Endothelial cell of umbilical vein (primary cell): ENCODE measurements at regions of chr3 and their contacts with region 1.

Region 1: DNA sequence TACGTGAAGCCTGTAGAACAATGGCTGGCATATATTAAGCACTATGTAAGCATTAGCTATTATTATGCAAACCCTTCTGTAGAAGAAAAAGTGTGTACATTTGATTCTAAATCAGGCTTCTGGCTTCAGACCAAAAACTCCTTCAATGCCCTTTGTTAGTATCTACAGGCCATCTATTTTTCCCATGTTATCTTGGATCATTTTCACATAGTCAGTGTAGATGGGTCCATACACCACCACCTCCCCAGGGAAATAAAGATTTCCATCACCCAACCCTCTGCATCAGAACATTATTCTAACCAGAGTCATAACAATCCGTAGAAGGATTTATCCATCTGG is 8.0 kb upstream of the KLHL6 start:
- DNase-seq: peak; percentile 68
- H3K4me3 ChIP-seq: no peak overlapping the region
- H3K27ac ChIP-seq: peak overlapping the region; percentile 38
- H3K4me1 ChIP-seq: peaks cover 20% of the 10 kb centered on the region
- H3K27me3 ChIP-seq: no peaks in the 10 kb centered on the region
- CTCF ChIP-seq: no peak
- POLR2A ChIP-seq: no peak

Region 2: GRCh38 chr3:183490670-183491069 is 72.8 kb before region 1 on chr3:
- CTCF ChIA-PET with region 1: no interaction called
- POLR2A ChIA-PET with region 1: no interaction called
- dilution Hi-C with region 1: no loop called
- intact Hi-C with region 1: loop called (anchors 1 kb)
- DNase-seq: peak; percentile 28
- H3K4me3 ChIP-seq: no peak overlapping the region
- H3K27ac ChIP-seq: no peak overlapping the region
- H3K4me1 ChIP-seq: peaks cover 6% of the 10 kb centered on the region
- H3K27me3 ChIP-seq: no peaks in the 10 kb centered on the region
- CTCF ChIP-seq: no peak
- POLR2A ChIP-seq: no peak

Region 3: GRCh38 chr3:183584246-183584913 is 20.9 kb after region 1 on chr3:
- CTCF ChIA-PET with region 1: interaction called, 7 read pairs
- POLR2A ChIA-PET with region 1: no interaction called
- dilution Hi-C with region 1: no loop called
- intact Hi-C with region 1: loop called (anchors 2 kb)
- DNase-seq: peak; percentile 71
- H3K4me3 ChIP-seq: no peak overlapping the region
- H3K27ac ChIP-seq: peak overlapping the region; percentile 2
- H3K4me1 ChIP-seq: peaks cover 29% of the 10 kb centered on the region
- H3K27me3 ChIP-seq: peaks cover 0 to 2% of the 10 kb centered on the region in 2 experiments
- CTCF ChIP-seq: no peak
- POLR2A ChIP-seq: no peak

Region 4: DNA sequence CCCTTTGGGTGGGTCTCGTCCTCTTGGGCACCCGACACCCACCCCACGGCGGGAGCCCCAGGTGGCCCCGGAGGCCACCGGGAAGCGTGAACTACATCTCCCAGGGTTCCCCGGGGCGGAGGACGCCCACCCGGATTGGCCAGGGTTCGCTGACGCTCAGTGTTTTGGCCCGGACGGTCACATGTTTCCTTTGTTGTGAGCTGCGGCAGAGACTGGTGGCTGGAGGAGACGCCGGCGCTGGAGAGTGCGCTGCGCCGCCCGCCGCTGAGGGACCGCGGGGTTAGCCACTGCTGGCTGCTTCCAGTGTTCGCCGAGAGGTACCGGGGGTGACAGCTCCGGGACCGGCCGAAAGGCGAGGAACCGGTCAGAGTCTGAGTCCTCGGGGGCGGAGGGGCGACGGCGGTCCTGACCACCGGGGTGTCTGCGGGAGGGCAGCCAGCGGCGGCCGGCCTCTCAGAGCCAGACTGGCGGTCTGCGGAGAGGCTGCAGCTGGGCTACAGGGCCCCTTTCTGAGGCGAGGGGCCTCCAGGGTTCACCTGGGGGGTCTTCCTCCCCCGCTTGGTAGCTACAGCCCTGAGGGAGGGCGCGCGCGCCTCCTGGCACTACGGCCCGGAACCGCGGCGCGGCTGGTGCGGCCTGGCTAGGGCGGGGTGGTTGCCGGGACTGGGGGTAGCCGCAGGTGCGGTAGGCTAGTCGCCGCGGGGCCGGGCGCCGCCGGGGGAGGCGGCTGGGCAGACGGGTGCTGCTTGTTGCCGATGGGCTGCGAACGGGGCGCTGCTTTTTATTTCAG is 72.1 kb after region 1 on chr3 and contains the start of gene KLHL24:
- CTCF ChIA-PET with region 1: interaction called, 3 read pairs
- POLR2A ChIA-PET with region 1: interaction called, 3 read pairs
- dilution Hi-C with region 1: no loop called
- intact Hi-C with region 1: loop called (anchors 1 kb)
- DNase-seq: peak; percentile 93
- H3K4me3 ChIP-seq: peak within 1 kb of the TSS; percentile 81 to 99 (median 84)
- H3K27ac ChIP-seq: peak within 1 kb of the TSS; percentile 89
- H3K4me1 ChIP-seq: peaks cover 19% of the 10 kb centered on the region
- H3K27me3 ChIP-seq: no peaks in the 10 kb centered on the region
- CTCF ChIP-seq: no peak
- POLR2A ChIP-seq: peak; percentile 41
- total RNA-seq, gene KLHL24: 45.8 and 46.2 TPM in 2 replicates

Region 5: DNA sequence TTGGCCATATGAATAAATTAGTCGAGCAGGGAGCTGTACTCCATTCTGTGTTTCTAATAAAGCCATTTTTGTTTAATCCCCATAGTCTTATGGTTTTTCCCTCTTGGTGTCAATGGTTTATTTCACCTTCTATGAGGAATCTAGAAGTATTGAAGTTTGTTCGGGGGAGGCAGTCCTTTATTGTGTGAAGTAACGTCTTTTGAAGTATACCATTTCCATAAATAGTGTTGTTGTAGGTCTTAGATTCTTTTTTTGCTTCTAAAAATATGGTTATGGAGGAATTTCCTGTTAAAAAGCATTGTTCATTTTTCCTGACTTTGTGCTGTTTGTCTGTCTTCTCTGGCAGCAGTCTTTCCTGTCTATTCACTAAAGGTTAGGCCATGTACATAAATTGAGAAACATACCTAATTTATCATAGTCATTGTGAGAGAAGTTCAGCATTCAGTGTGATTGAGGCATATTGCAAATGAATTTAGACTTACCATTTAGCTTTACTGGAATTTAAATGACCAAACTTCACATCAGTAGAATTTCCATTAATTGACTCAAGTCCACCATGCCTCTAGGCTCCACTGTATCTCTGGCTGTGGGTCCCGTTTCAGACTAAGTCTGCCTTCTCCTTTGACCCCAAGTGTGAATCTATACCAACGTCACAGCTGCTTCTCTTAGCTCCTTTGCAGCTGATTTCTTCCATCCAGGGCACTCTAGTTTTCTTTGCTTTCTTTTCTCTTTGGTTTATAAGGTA is 171.4 kb after region 1 on chr3:
- CTCF ChIA-PET with region 1: no interaction called
- POLR2A ChIA-PET with region 1: no interaction called
- dilution Hi-C with region 1: no loop called
- intact Hi-C with region 1: loop called (anchors 2 kb)
- DNase-seq: peak; percentile 90
- H3K4me3 ChIP-seq: peak overlapping the region in 1 of 3 experiments; percentile 21
- H3K27ac ChIP-seq: peak overlapping the region; percentile 74
- H3K4me1 ChIP-seq: peaks cover 28% of the 10 kb centered on the region
- H3K27me3 ChIP-seq: no peaks in the 10 kb centered on the region
- CTCF ChIP-seq: no peak
- POLR2A ChIP-seq: no peak